ENCODE measurements at regions of chr3 and their contacts with region 1.

Region 1: GRCh38 chr3:14124615-14125190 is at the starts of genes CHCHD4 and TMEM43:
- DNase-seq: peak; percentile 99
- ATAC-seq: peak; percentile 85
- H3K4me3 ChIP-seq: peak within 1 kb of the TSS; percentile 74 to 97 (median 85)
- H3K4me3 Mint-ChIP-seq: peak within 1 kb of the TSS; percentile 97
- H3K27ac ChIP-seq: peak within 1 kb of the TSS; percentile 72 to 89
- H3K27ac Mint-ChIP-seq: peak within 1 kb of the TSS; percentile 95
- H3K4me1 ChIP-seq: peaks cover 24 to 32% of the 10 kb centered on the region in 2 donors
- H3K4me1 Mint-ChIP-seq: peaks cover 45% of the 10 kb centered on the region
- H3K27me3 ChIP-seq: no peaks in the 10 kb centered on the region
- H3K27me3 Mint-ChIP-seq: no peaks in the 10 kb centered on the region
- CTCF ChIP-seq: no peak
- total RNA-seq, gene CHCHD4: 5.1 and 8.0 TPM in 2 replicates
- total RNA-seq, gene TMEM43: 37.4 and 37.6 TPM in 2 replicates

Region 2: GRCh38 chr3:13110678-13111116 is 1014.0 kb before region 1 on chr3:
- CTCF ChIA-PET with region 1: no interaction called
- POLR2A ChIA-PET with region 1: no interaction called
- intact Hi-C with region 1: loop called (anchors 5 kb)
- DNase-seq: peak; percentile 98
- ATAC-seq: peak; percentile 86
- H3K4me3 ChIP-seq: peak overlapping the region in 4 of 5 experiments; percentile 13 to 24 (median 16)
- H3K4me3 Mint-ChIP-seq: peak overlapping the region; percentile 64
- H3K27ac ChIP-seq: peak overlapping the region; percentile 98 to 99
- H3K27ac Mint-ChIP-seq: peak overlapping the region; percentile 96
- H3K4me1 ChIP-seq: peaks cover 59 to 62% of the 10 kb centered on the region in 2 donors
- H3K4me1 Mint-ChIP-seq: peaks cover 58% of the 10 kb centered on the region
- H3K27me3 ChIP-seq: peaks cover 0 to under 1% (median 0%) of the 10 kb centered on the region in 4 experiments
- H3K27me3 Mint-ChIP-seq: no peaks in the 10 kb centered on the region
- CTCF ChIP-seq: no peak

Region 3: DNA sequence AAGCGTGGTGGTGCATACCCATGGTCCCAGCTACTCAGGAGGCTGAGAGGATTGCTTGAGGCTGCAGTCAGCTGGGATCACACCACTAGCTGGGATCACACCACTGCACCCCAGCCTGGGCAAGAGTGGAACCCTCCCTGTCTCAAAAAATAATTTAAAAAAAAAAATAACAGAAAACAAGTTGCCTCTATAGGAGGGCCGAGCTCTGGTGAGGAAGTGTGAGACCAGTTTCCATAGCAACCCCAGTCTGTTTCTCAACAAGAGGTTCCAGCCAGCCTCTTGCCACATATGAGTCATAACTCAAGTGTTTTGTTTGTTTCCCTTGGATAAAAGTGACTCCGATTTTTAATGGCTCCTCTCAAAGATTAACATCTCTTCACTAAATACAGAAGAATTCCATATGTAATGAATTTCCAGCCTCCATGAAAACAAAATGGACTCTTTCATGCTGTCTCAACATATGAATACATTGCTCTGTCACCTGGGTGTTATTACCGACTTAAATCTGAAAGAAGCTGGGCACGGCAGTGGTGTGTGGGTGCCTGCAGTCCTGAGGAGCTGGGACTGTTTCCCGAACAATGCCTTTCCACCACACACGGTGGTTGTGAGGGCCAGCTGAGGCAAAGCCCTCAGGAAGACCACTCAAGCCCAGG is 19.8 kb after region 1 on chr3:
- CTCF ChIA-PET with region 1: interaction called, 5 read pairs
- POLR2A ChIA-PET with region 1: interaction called, 6 read pairs
- intact Hi-C with region 1: loop called (anchors 1 kb)
- DNase-seq: peak; percentile 88
- ATAC-seq: peak; percentile 88
- H3K4me3 ChIP-seq: peak overlapping the region in 1 of 5 experiments; percentile 73
- H3K4me3 Mint-ChIP-seq: peak overlapping the region; percentile 65
- H3K27ac ChIP-seq: peak overlapping the region; percentile 81 to 95
- H3K27ac Mint-ChIP-seq: peak overlapping the region; percentile 96
- H3K4me1 ChIP-seq: peaks cover 18 to 21% of the 10 kb centered on the region in 2 donors
- H3K4me1 Mint-ChIP-seq: peaks cover 17% of the 10 kb centered on the region
- H3K27me3 ChIP-seq: no peaks in the 10 kb centered on the region
- H3K27me3 Mint-ChIP-seq: no peaks in the 10 kb centered on the region
- CTCF ChIP-seq: no peak

Region 4: GRCh38 chr3:14402304-14402811 is 277.7 kb after region 1 on chr3 and contains the start of gene SLC6A6:
- CTCF ChIA-PET with region 1: no interaction called
- POLR2A ChIA-PET with region 1: no interaction called
- intact Hi-C with region 1: loop called (anchors 1 kb)
- DNase-seq: peak; percentile 97
- ATAC-seq: peak; percentile 80
- H3K4me3 ChIP-seq: peak within 1 kb of the TSS; percentile 53 to 87 (median 85)
- H3K4me3 Mint-ChIP-seq: peak within 1 kb of the TSS; percentile 99
- H3K27ac ChIP-seq: peak within 1 kb of the TSS; percentile 81 to 89
- H3K27ac Mint-ChIP-seq: peak within 1 kb of the TSS; percentile 98
- H3K4me1 ChIP-seq: peaks cover 39 to 55% of the 10 kb centered on the region in 2 donors
- H3K4me1 Mint-ChIP-seq: peaks cover 60% of the 10 kb centered on the region
- H3K27me3 ChIP-seq: no peaks in the 10 kb centered on the region
- H3K27me3 Mint-ChIP-seq: no peaks in the 10 kb centered on the region
- CTCF ChIP-seq: peak; percentile 67
- total RNA-seq, gene SLC6A6: 48.7 and 50.1 TPM in 2 replicates

Region 5: DNA sequence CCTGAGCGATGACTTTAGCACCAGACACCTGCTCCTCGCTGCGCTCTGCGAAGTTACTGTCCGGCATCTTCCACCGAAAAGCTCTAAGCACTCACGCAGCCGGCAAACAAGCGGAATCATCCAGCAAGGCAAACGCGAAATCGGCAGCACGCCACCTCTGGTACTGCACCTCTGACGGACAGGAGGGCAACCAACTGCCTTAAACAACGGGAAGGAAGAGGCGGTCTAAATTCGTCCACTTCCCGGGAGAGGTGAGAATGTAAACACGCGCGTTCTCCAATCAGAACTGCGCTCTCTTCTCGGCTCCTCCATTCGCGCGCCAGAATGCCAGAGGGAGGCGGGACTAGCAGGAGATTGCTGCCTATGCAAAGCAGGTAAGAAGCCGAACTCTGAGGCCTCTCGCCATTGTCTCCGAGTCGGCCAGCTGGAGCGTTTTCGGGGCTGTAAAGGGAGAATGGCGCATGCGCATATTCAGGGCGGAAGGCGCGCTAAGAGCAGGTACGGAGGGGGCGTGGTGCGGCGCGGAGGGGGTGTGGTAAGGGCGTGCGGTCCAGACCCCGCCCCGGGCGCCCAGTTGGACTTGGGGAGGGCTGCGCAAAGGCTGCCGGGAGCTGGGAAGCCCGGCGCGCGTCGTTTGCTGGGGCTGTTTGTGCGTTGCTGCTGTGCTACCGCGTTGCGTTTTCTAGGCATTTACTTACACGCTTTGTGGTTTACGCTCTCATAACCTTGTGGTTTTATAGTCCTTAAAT is 1476.9 kb after region 1 on chr3 and contains the starts of genes BTD and HACL1:
- CTCF ChIA-PET with region 1: no interaction called
- POLR2A ChIA-PET with region 1: no interaction called
- intact Hi-C with region 1: loop called (anchors 10 kb)
- DNase-seq: peak; percentile 99
- ATAC-seq: peak; percentile 88
- H3K4me3 ChIP-seq: peak within 1 kb of the TSS; percentile 67 to 99 (median 92)
- H3K4me3 Mint-ChIP-seq: peak within 1 kb of the TSS; percentile 100
- H3K27ac ChIP-seq: peak within 1 kb of the TSS; percentile 81 to 87
- H3K27ac Mint-ChIP-seq: peak within 1 kb of the TSS; percentile 99
- H3K4me1 ChIP-seq: peaks cover 16 to 23% of the 10 kb centered on the region in 2 donors
- H3K4me1 Mint-ChIP-seq: peaks cover 41% of the 10 kb centered on the region
- H3K27me3 ChIP-seq: no peaks in the 10 kb centered on the region
- H3K27me3 Mint-ChIP-seq: no peaks in the 10 kb centered on the region
- CTCF ChIP-seq: peak; percentile 31
- total RNA-seq, gene BTD: 21.9 and 25.3 TPM in 2 replicates
- total RNA-seq, gene HACL1: 38.7 and 38.9 TPM in 2 replicates